ENCODE measurements at regions of chr20 and their contacts with region 1.

Region 1: GRCh38 chr20:11274141-11274594 is 600.4 kb upstream of the JAG1 start:
- DNase-seq: peak; percentile 34
- H3K4me3 ChIP-seq: no peak overlapping the region
- H3K27ac ChIP-seq: no peak overlapping the region
- H3K4me1 ChIP-seq: no peaks in the 10 kb centered on the region
- H3K27me3 ChIP-seq: no peaks in the 10 kb centered on the region
- CTCF ChIP-seq: peak; percentile 43

Region 2: GRCh38 chr20:10469599-10469998 is 804.6 kb before region 1 on chr20:
- intact Hi-C with region 1: loop called (anchors 5 kb)
- DNase-seq: peak; percentile 44
- H3K4me3 ChIP-seq: no peak overlapping the region
- H3K27ac ChIP-seq: no peak overlapping the region
- H3K4me1 ChIP-seq: no peaks in the 10 kb centered on the region
- H3K27me3 ChIP-seq: no peaks in the 10 kb centered on the region
- CTCF ChIP-seq: peak; percentile 48

Region 3: DNA sequence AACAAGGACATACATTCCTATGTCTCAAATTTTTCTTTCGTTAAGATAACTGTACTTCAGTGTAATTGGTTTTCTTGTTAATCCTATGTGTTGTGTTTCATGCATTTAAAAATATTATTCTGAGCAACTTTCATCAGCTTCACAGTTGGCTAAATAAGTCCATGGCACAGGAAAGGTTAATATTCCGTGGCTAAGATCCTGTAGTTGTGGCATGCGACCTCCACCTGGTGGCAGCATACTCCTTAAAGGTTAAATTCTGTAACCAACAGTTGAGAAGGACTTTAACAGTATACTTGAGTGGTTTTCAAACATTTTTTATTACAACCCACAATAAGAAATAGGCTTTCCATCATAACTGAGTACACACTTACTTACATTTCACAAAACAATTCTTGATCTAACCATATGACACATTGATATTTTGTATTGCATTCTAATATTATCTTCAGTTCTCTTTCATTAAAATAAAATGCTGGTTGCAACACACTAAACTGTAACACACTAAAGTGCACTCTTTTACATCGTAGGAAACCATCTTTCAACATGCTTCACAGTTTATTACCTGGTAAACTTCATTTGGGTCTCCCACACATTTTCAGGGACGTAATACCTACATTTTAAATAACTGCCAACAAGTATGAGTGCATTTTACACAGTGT is 720.7 kb before region 1 on chr20:
- intact Hi-C with region 1: loop called (anchors 5 kb)
- DNase-seq: peak; percentile 70
- H3K4me3 ChIP-seq: no peak overlapping the region
- H3K27ac ChIP-seq: no peak overlapping the region
- H3K4me1 ChIP-seq: no peaks in the 10 kb centered on the region
- H3K27me3 ChIP-seq: no peaks in the 10 kb centered on the region
- CTCF ChIP-seq: peak; percentile 84

Region 4: GRCh38 chr20:10673988-10674711 is 600.0 kb before region 1 on chr20 and contains the start of gene JAG1:
- intact Hi-C with region 1: loop called (anchors 5 kb)
- DNase-seq: peak; percentile 97
- H3K4me3 ChIP-seq: peak within 1 kb of the TSS; percentile 77
- H3K27ac ChIP-seq: peak within 1 kb of the TSS; percentile 100
- H3K4me1 ChIP-seq: no peaks in the 10 kb centered on the region
- H3K27me3 ChIP-seq: no peaks in the 10 kb centered on the region
- CTCF ChIP-seq: no peak
- total RNA-seq, gene JAG1: 66.5 to 102 TPM

Region 5: DNA sequence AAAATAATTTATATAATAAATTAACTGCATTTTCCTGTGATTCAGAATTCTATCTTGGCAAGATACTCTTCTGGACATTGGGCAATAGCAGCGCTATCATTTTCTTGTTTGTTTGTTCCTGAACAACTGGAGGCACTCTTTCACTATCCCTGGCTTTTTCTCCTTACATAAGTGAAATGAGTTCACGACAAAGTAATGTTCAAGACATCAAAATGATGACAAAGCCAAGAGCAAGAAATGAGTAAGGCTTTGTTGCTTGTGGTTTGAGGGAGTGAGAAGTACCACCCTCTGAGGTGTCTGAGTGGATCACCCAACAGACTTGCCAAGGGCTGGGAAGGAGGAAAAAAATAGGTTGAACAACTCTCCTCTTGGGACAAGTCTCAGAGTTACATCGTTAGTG is 133.8 kb before region 1 on chr20:
- intact Hi-C with region 1: no loop called
- DNase-seq: no peak
- H3K4me3 ChIP-seq: no peak overlapping the region
- H3K27ac ChIP-seq: no peak overlapping the region
- H3K4me1 ChIP-seq: no peaks in the 10 kb centered on the region
- H3K27me3 ChIP-seq: no peaks in the 10 kb centered on the region
- CTCF ChIP-seq: no peak

Measured in colonic mucosa (tissue), 4 donors.